Activated T-helper 1 cell treated with anti-CD3 and anti-CD28 coated beads, Interleukin-12 subunit alpha, Interleukin-12 subunit beta, Interleukin-2, Interleukin-4 antibody, amounts not matched to agents 30 ng/mL and 10 ng/mL and 1 ng/mL, durations not matched to agents 14 hours and 24 hours and 36 hours (primary cell): ENCODE measurements at regions of chr1 and their contacts with region 1.

Region 1: GRCh38 chr1:163315773-163316374 is 5.9 kb upstream of the NUF2 start:
- DNase-seq: no peak
- H3K4me3 Mint-ChIP-seq: no peak overlapping the region
- H3K27ac Mint-ChIP-seq: no peak overlapping the region
- H3K4me1 Mint-ChIP-seq: peaks cover 3% of the 10 kb centered on the region
- H3K27me3 Mint-ChIP-seq: no peaks in the 10 kb centered on the region

Region 2: DNA sequence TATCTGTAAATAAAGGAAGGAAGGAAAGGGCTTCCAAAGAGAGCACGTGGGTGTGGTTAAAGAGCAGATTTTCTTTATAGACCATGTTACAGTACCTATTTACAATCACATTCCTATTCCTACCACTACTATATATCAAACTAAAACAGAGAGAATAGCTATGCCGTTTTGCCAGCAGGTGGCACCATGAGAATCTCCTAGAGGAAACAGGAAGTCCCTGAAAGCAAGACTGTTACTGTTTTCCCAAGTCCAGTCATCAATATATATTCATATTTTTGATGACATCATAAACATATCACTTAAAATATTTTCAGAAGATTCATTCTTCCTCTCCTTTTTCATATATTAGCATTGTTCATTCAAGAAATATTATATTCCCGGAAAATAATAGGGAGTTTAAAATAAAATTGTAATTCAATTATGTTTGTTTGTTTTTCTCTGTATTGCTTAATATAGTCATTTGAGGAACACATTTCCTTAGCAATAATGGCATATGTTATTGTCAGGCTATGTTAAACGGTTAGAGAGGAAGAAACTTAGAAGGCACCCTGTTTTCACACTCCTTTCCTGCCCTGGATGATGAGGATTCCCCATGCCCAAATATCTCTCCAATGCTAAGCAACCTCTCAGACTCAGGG is 461.5 kb before region 1 on chr1:
- intact Hi-C with region 1: loop called (anchors 1 kb)
- DNase-seq: no peak
- H3K4me3 Mint-ChIP-seq: no peak overlapping the region
- H3K27ac Mint-ChIP-seq: no peak overlapping the region
- H3K4me1 Mint-ChIP-seq: no peaks in the 10 kb centered on the region
- H3K27me3 Mint-ChIP-seq: peaks cover 3% of the 10 kb centered on the region

Region 3: GRCh38 chr1:163071405-163072255 is 244.2 kb before region 1 on chr1:
- intact Hi-C with region 1: loop called (anchors 1 kb)
- DNase-seq: peak; percentile 11
- H3K4me3 Mint-ChIP-seq: no peak overlapping the region
- H3K27ac Mint-ChIP-seq: no peak overlapping the region
- H3K4me1 Mint-ChIP-seq: no peaks in the 10 kb centered on the region
- H3K27me3 Mint-ChIP-seq: peaks cover 19% of the 10 kb centered on the region

Region 4: GRCh38 chr1:163290025-163290640 is 25.7 kb before region 1 on chr1:
- intact Hi-C with region 1: no loop called
- DNase-seq: no peak
- H3K4me3 Mint-ChIP-seq: no peak overlapping the region
- H3K27ac Mint-ChIP-seq: no peak overlapping the region
- H3K4me1 Mint-ChIP-seq: no peaks in the 10 kb centered on the region
- H3K27me3 Mint-ChIP-seq: no peaks in the 10 kb centered on the region